HepG2 (cell line): ENCODE measurements at regions of chr1 and their contacts with region 1.

Region 1: GRCh38 chr1:221234791-221235190 is 355.5 kb downstream of the HLX start:
- DNase-seq: no peak
- ATAC-seq: no peak
- H3K4me3 ChIP-seq: no peak overlapping the region
- H3K27ac ChIP-seq: no peak overlapping the region
- H3K4me1 ChIP-seq: no peaks in the 10 kb centered on the region
- H3K27me3 ChIP-seq: no peaks in the 10 kb centered on the region
- CTCF ChIP-seq: no peak
- EP300 ChIP-seq: no peak
- POLR2A ChIP-seq: no peak
- RAD21 ChIP-seq: no peak

Region 2: GRCh38 chr1:221203224-221204054 is 31.4 kb before region 1 on chr1:
- CTCF ChIA-PET with region 1: no interaction called
- POLR2A ChIA-PET with region 1: no interaction called
- in situ Hi-C with region 1: no loop called
- intact Hi-C with region 1: no loop called
- DNase-seq: peak; percentile 56
- ATAC-seq: peak; percentile 69; the same call in 2 of the 3 replicates
- H3K4me3 ChIP-seq: no peak overlapping the region
- H3K27ac ChIP-seq: no peak overlapping the region
- H3K4me1 ChIP-seq: no peaks in the 10 kb centered on the region
- H3K27me3 ChIP-seq: no peaks in the 10 kb centered on the region
- CTCF ChIP-seq: peak; percentile 82
- EP300 ChIP-seq: no peak
- POLR2A ChIP-seq: no peak
- RAD21 ChIP-seq: peak; percentile 34; the same call in 1 of the 2 replicates

Region 3: GRCh38 chr1:221246628-221247415 is 12.0 kb after region 1 on chr1:
- CTCF ChIA-PET with region 1: no interaction called
- POLR2A ChIA-PET with region 1: no interaction called
- in situ Hi-C with region 1: no loop called
- intact Hi-C with region 1: loop called (anchors 1 kb)
- DNase-seq: no peak
- ATAC-seq: no peak
- H3K4me3 ChIP-seq: no peak overlapping the region
- H3K27ac ChIP-seq: no peak overlapping the region
- H3K4me1 ChIP-seq: no peaks in the 10 kb centered on the region
- H3K27me3 ChIP-seq: no peaks in the 10 kb centered on the region
- CTCF ChIP-seq: no peak
- EP300 ChIP-seq: no peak
- POLR2A ChIP-seq: no peak
- RAD21 ChIP-seq: no peak